Astrocyte of the cerebellum (primary cell): ENCODE measurements at regions of chr15 and their contacts with region 1.

Region 1: DNA sequence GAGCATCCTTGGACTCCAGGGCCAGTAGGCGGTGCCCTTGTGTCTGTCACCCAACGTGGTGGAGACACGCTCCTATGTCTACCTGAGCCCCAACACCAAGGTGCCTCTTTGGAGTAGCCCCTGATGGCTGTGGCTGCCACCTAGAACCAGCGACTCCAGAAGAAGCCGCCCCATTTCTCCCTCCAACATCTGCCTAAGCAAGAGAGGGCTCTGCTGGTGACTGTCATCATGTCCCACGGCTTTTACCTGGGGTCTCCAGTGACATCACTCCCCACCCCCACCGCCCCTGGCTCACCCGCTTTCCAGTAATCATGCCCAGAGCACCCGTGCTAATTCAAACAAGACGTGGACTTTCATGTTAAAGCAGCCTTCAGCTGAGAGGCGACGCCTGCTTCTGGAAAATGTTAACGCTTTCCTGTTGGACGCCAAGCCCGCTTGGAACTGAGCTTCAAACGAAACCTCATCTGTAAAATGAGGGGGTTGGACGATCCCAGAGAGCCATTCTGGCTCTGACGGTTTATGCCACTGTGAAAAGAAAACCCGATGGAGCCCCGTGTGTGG is 57.0 kb downstream of the ISG20 start:
- DNase-seq: no peak
- H3K4me3 ChIP-seq: no peak overlapping the region
- CTCF ChIP-seq: no peak

Region 2: DNA sequence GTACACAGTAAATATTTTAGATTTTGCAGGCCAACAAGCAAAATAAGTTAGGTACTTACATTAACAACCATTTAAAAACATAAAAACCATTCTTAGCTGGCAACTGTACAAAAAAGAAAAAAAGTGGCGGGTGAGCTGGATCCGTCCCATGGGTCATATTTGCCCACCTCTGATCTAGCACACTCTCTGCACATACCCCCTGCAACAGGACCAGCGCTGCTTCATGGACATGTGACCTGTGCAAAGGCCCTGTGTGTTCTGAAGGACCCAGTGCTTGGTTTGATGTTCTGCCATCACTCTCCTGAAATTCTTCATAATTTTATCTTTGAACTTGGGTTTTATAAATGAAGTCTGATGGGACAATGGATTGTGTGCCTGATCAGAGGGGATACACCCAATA is 35.0 kb after region 1 on chr15:
- in situ Hi-C with region 1: loop called (anchors 5 kb)
- DNase-seq: no peak
- H3K4me3 ChIP-seq: no peak overlapping the region
- CTCF ChIP-seq: no peak

Region 3: DNA sequence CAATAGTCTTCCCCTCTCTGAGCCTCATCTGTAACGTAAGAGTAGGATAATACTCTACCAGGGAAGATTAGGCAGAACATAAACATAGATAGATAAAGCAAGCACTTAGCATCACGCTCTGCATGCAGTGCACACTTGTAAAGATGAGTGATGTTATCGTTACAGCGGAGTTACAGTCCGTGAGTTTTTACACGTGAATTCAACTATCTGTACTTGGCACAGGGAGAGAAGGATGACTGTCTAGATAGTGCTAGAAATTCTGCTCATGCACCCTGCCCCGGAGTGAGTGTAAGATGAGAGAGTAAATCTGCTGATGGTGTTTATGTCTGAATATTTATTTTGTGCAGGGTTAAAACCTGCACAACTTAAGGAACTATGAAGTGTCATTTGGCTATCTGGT is 163.8 kb after region 1 on chr15:
- in situ Hi-C with region 1: no loop called
- DNase-seq: no peak
- H3K4me3 ChIP-seq: no peak overlapping the region
- CTCF ChIP-seq: no peak